A549 (cell line): ENCODE measurements at regions of chr5 and their contacts with region 1.

Region 1: GRCh38 chr5:171913987-171914273 is 92.5 kb downstream of the FBXW11 start:
- DNase-seq: no peak
- ATAC-seq: no peak
- H3K4me3 ChIP-seq: no peak overlapping the region
- H3K27ac ChIP-seq: no peak overlapping the region
- H3K4me1 ChIP-seq: peaks cover 16% of the 10 kb centered on the region
- CTCF ChIP-seq: no peak
- EP300 ChIP-seq: no peak
- POLR2A ChIP-seq: no peak
- RAD21 ChIP-seq: no peak

Region 2: DNA sequence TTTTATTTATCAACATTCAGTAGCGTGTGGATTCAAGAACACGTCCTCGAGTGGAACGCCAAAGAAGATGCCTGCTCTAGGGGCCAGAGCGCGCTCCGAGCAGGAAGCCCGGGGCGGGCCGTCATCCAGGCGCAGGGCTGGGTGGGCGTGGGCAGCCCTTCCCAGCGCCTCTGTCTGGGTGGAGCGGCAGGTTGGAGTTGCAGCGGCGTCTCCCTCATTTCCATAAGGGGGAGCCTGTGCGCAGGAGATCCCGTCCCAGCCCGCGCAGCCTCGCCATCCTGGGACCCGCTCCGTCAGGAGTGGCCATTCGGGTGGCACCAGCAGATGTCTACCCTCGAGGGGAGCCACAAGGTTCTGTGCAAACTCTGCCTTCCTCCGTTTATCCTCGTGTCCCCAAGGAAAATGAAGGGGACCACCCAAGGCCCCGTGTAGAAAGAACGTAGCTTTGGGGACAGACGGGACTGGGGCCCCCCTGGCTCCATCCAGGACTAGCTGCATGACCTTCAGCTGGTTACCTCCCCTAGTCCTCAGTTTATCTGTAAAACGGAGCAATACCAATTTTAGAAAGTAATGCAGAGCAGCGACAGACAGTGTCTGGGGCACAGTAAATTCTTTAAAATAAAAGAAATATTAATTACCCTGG is 283.8 kb before region 1 on chr5:
- CTCF ChIA-PET with region 1: interaction called, 29 read pairs
- POLR2A ChIA-PET with region 1: no interaction called
- DNase-seq: peak; percentile 71 to 88
- ATAC-seq: peak; percentile 97 to 100
- H3K4me3 ChIP-seq: peak overlapping the region; percentile 50
- H3K27ac ChIP-seq: peak overlapping the region; percentile 44 to 45; a peak in 3 of 6 replicates
- H3K4me1 ChIP-seq: no peaks in the 10 kb centered on the region
- CTCF ChIP-seq: peak; percentile 59
- EP300 ChIP-seq: no peak
- POLR2A ChIP-seq: no peak
- RAD21 ChIP-seq: peak; percentile 78 to 81

Region 3: GRCh38 chr5:171845857-171846256 is 68.1 kb before region 1 on chr5:
- CTCF ChIA-PET with region 1: no interaction called
- POLR2A ChIA-PET with region 1: no interaction called
- DNase-seq: peak in 1 of 2 experiments; percentile 17
- ATAC-seq: peak; percentile 54 to 65; a peak in 5 of 6 replicates
- H3K4me3 ChIP-seq: no peak overlapping the region
- H3K27ac ChIP-seq: no peak overlapping the region
- H3K4me1 ChIP-seq: no peaks in the 10 kb centered on the region
- CTCF ChIP-seq: peak; percentile 31; the same call in 2 of the 3 replicates
- EP300 ChIP-seq: no peak
- POLR2A ChIP-seq: no peak
- RAD21 ChIP-seq: peak; percentile 49 to 55; a peak in 4 of 5 replicates

Region 4: DNA sequence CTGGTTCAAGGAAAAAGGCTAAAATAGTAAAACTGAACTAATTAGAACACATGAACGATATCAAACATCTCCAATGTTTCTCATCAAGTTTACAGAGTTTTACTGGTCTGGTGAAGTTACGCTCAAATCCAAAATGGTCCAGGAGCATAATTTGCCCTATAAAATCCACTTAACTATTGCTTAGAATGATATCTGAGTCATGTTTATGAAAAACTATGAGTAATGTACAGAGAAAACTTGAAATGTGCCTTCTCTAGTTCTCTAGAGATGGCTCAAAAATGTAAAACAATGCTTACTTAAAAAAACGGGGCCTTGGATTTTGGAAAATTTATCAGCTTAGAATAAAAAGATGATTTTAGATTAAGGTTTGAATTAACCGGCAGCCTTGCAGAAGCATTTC is 15.5 kb before region 1 on chr5:
- CTCF ChIA-PET with region 1: interaction called, 19 read pairs
- POLR2A ChIA-PET with region 1: no interaction called
- DNase-seq: no peak
- ATAC-seq: no peak
- H3K4me3 ChIP-seq: no peak overlapping the region
- H3K27ac ChIP-seq: no peak overlapping the region
- H3K4me1 ChIP-seq: no peaks in the 10 kb centered on the region
- CTCF ChIP-seq: no peak
- EP300 ChIP-seq: no peak
- POLR2A ChIP-seq: no peak
- RAD21 ChIP-seq: no peak

Region 5: GRCh38 chr5:172035039-172035438 is 121.1 kb after region 1 on chr5:
- CTCF ChIA-PET with region 1: interaction called, 64 read pairs
- POLR2A ChIA-PET with region 1: no interaction called
- DNase-seq: no peak
- ATAC-seq: no peak
- H3K4me3 ChIP-seq: no peak overlapping the region
- H3K27ac ChIP-seq: no peak overlapping the region
- H3K4me1 ChIP-seq: no peaks in the 10 kb centered on the region
- CTCF ChIP-seq: no peak
- EP300 ChIP-seq: no peak
- POLR2A ChIP-seq: no peak
- RAD21 ChIP-seq: no peak

Region 6: GRCh38 chr5:172059661-172060100 is 145.8 kb after region 1 on chr5:
- CTCF ChIA-PET with region 1: interaction called, 38 read pairs
- POLR2A ChIA-PET with region 1: no interaction called
- DNase-seq: peak in 1 of 2 experiments; percentile 29
- ATAC-seq: peak; percentile 56 to 74; a peak in 5 of 6 replicates
- H3K4me3 ChIP-seq: no peak overlapping the region
- H3K27ac ChIP-seq: no peak overlapping the region
- H3K4me1 ChIP-seq: no peaks in the 10 kb centered on the region
- CTCF ChIP-seq: peak; percentile 73
- EP300 ChIP-seq: no peak
- POLR2A ChIP-seq: no peak
- RAD21 ChIP-seq: peak; percentile 71 to 80

Region 7: DNA sequence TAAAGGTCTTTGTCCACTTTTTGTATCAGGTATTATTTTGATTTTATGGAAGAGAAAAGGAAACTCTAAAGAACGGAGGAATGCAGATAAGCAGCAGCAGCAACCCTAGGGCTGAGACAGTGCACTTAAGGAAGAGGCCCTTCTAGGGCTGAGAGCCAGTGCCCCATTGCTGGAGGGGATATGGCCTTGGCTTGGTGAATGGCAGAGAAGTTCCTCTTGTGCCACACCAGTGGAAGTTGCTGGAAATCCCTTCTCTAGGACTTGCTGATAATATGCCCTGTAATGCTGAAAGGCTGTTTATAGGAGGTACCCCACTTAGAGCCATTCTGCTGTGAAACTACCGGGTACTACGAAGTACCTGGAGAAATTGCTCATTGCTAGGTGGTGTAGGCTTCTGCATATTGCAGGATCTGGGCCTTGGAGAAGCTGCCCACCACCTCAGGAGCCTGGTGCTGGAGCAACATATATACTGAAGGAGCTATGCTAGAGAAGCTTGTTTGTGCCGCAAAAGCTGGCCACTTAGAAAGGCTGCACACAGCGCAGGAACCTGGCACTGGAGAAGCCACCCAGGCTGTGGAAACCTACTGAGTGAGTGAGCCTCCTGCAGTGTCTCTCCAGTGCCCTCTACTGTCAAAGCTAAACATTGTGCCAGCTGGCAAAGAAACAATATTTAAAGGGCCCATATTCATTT is 379.3 kb after region 1 on chr5:
- CTCF ChIA-PET with region 1: interaction called, 22 read pairs
- POLR2A ChIA-PET with region 1: interaction called, 3 read pairs
- DNase-seq: peak; percentile 58 to 73
- ATAC-seq: peak; percentile 99
- H3K4me3 ChIP-seq: no peak overlapping the region
- H3K27ac ChIP-seq: 0 out of 6 replicates have a peak overlapping the region, but pooled peaks of 1 of the 2 experiments have one; percentile 2
- H3K4me1 ChIP-seq: no peaks in the 10 kb centered on the region; the same call in 2 of the 3 replicates
- CTCF ChIP-seq: peak; percentile 93
- EP300 ChIP-seq: no peak
- POLR2A ChIP-seq: no peak
- RAD21 ChIP-seq: peak; percentile 87 to 96